PC-3 (cell line): ENCODE measurements at regions of chr14 and their contacts with region 1.

Region 1: DNA sequence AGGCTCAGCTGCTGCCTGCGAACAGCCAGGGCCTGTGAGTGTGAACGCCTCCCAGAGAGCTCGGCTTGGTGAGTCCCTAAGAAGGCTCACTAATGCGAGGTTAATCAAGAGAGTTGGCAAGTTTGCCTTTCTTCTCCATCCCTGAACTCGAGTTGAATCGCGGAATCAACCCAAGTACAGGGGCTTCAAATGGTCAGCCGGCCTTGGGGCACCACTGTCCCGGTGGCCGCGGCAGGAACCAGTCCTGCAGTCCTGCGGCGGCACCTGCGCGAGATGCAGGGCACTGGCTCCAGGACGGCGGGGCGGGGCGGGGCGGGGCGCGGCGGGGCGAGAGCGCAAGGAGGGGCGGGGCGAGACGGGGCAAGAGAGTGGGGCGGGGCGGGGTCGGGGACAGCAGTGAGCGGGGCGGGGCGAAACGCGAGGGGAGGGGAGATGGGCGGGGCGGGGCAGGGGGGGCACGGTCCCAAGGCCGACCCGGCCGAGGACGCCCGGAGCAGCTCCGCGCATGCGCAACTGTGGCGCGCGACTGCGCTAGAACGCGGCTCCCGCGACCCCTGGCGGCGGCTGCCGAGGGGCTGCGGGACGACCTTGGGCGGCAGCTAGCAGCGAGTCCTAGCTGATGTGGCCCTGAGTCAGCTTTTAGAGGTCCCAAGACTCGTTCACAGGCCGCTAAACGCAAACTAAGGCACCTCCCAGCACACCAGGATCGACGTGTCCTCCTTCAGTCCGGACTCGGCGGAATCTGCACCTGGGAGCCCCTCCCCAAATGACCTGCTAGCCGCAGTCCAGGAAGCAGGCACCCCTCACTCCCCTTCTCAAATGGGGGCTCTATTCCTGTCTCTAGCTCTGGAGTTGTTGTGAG is 58.0 kb downstream of the TTC7B start:
- DNase-seq: peak; percentile 98
- ATAC-seq: peak; percentile 96
- H3K4me3 ChIP-seq: peak overlapping the region; percentile 67
- H3K27ac ChIP-seq: peak overlapping the region; percentile 64
- H3K4me1 ChIP-seq: peaks cover 12% of the 10 kb centered on the region
- H3K27me3 ChIP-seq: no peaks in the 10 kb centered on the region
- CTCF ChIP-seq: peak; percentile 79

Region 2: DNA sequence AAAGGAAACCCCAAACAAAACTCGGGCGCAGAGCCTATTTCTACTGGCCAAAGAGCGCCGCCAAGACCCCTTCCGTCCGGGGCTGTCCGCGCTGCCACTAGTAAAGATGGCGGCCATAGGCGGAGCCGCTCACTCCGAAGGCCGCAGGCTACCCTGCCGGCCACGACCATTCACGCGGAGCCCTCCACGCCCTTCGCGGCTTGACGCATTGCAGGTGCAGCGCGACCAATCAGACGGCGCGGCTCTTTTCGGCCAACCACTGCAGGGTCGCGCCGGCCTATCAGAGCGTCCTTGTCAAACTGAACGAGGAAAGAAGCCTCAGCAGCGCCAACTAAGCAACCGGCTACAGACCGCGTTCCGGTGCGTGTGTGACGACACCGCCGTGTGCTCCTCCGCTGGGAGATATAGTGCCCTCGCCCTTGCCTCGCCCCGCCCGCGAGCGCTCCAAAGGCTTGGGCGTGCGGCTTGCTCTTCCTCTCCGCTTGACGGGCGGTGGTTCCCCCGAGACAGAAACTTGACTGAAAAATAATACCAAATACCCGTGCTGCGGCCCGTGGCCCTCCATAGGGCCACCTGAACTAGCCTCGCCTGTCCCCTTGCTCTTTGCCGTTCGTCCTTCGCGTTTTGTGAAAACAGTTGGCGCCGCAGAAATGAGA is 375.1 kb before region 1 on chr14:
- CTCF ChIA-PET with region 1: interaction called, 3 read pairs
- POLR2A ChIA-PET with region 1: no interaction called
- intact Hi-C with region 1: loop called (anchors 1 kb)
- DNase-seq: peak; percentile 100
- ATAC-seq: peak; percentile 92
- H3K4me3 ChIP-seq: peak overlapping the region; percentile 82
- H3K27ac ChIP-seq: peak overlapping the region; percentile 86
- H3K4me1 ChIP-seq: peaks cover 35% of the 10 kb centered on the region
- H3K27me3 ChIP-seq: no peaks in the 10 kb centered on the region
- CTCF ChIP-seq: 0 out of 2 replicates have a peak, but pooled peaks have one; percentile 10

Region 3: DNA sequence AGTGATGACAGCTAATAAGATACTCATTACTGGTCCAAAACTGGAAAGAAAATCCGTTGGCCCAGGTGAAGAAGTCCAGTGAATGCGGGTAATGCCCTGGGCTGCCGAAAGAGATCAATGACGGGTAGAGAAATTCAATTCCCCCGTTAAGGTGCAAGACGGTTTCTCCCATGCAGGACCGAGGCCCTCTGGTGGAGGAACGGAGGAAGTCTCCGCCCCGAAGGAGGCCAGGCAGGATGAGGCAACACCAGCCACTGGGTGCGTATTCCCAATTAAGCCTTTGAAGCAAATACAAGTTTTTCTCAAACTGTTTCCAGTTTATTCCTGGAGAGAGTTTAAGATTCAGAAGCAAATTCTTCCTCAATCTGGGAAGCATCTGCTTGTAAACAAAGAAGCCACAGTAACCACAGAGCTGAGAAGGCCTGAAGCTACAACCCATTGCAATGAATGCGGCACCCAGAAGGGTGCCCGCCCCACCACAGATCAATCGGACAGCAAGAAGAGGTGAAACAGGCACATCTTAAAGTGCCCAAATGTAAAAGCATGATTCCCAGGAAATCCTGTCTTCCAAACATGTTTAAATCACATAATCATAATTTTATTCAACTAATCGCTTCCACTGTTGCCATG is 60.6 kb before region 1 on chr14:
- CTCF ChIA-PET with region 1: interaction called, 5 read pairs
- POLR2A ChIA-PET with region 1: no interaction called
- intact Hi-C with region 1: loop called (anchors 1 kb)
- DNase-seq: peak; percentile 82
- ATAC-seq: peak; percentile 97
- H3K4me3 ChIP-seq: no peak overlapping the region
- H3K27ac ChIP-seq: no peak overlapping the region
- H3K4me1 ChIP-seq: 0 out of 2 replicates have a peak, but pooled peaks cover 3% of the 10 kb centered on the region
- H3K27me3 ChIP-seq: no peaks in the 10 kb centered on the region
- CTCF ChIP-seq: peak; percentile 98

Region 4: GRCh38 chr14:90739318-90740068 is 18.8 kb before region 1 on chr14:
- CTCF ChIA-PET with region 1: no interaction called
- POLR2A ChIA-PET with region 1: no interaction called
- intact Hi-C with region 1: no loop called
- DNase-seq: no peak
- ATAC-seq: peak; percentile 20; the same call in 1 of the 2 replicates
- H3K4me3 ChIP-seq: no peak overlapping the region
- H3K27ac ChIP-seq: no peak overlapping the region
- H3K4me1 ChIP-seq: no peaks in the 10 kb centered on the region
- H3K27me3 ChIP-seq: no peaks in the 10 kb centered on the region
- CTCF ChIP-seq: no peak

Region 5: GRCh38 chr14:90827916-90828610 is 69.8 kb after region 1 on chr14:
- CTCF ChIA-PET with region 1: interaction called, 12 read pairs
- POLR2A ChIA-PET with region 1: no interaction called
- intact Hi-C with region 1: loop called (anchors 5 kb)
- DNase-seq: peak; percentile 91
- ATAC-seq: peak; percentile 100
- H3K4me3 ChIP-seq: peak overlapping the region; percentile 61
- H3K27ac ChIP-seq: no peak overlapping the region
- H3K4me1 ChIP-seq: peaks cover 10% of the 10 kb centered on the region
- H3K27me3 ChIP-seq: no peaks in the 10 kb centered on the region
- CTCF ChIP-seq: no peak